BJ (cell line): ENCODE measurements at regions of chr11 and their contacts with region 1.

Region 1: DNA sequence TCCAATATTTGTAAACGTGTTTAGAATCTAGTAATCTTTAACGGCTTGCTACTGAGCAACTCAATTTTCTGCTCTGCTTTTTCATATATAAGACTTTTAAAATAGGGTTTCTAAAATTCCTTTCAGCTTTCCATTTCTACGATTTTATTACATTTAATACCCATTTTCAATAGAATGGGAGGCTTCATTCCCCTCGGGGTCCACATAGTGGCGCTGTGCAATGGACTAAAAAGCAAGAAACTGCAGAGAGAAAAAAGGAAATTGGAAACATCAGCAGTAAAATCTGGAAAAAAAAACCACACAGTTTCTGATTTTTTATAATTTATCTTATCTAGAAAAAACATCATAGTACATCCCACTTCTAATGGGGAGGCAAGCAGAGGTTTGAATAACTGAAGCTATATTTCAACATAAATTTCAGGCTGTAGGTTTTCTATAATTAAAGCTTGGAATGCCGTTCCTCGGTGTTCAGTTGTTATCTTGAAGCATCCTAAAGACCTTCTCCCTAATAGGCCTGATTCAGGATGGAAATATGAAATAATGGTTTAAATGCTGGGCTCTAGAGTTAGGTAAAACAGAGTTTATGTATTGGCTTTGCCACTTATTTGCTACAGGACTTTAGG is 18.7 kb upstream of the JHY start:
- DNase-seq: no peak
- H3K4me3 ChIP-seq: no peak overlapping the region
- H3K27me3 ChIP-seq: peaks cover 4% of the 10 kb centered on the region
- CTCF ChIP-seq: peak; percentile 91

Region 2: DNA sequence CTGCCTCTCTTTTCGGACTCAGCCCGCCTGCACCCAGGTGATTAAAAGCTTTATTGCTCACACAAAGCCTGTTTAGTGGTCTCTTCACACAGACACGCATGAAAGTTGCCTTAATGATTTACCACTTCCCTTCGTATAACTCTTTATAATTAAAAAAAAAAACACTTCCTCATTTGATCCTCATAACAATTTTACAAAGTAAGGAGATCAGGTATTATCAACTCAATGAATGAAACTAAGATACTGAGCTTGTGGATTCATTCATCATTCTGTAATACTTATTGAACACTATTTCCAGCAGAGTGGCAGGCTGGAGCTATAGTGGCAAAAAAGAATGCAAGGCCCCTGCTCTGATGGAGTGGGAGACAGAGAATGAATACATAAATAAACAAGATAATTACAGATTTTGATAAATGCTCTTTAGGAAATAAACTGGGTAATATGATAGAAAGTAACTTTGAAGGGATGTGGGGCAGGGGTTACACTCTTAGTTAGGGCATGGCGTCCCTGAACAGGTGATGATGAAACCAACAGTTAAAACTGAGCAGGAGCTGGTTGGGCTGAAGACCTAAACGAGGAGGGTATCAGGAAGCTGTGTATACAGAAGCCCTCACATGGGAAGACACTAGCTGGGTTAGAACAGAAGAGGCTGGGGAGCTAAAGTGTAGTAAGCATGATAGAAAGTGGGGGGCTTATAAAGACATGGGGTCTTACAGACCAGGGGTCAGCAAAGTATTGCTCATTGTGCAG is 30.9 kb before region 1 on chr11:
- CTCF ChIA-PET with region 1: no interaction called
- POLR2A ChIA-PET with region 1: no interaction called
- DNase-seq: no peak
- H3K4me3 ChIP-seq: no peak overlapping the region
- H3K27me3 ChIP-seq: no peaks in the 10 kb centered on the region
- CTCF ChIP-seq: no peak

Region 3: GRCh38 chr11:122882857-122883645 is 19.2 kb after region 1 on chr11:
- CTCF ChIA-PET with region 1: interaction called, 13 read pairs
- POLR2A ChIA-PET with region 1: no interaction called
- DNase-seq: no peak
- H3K4me3 ChIP-seq: peak overlapping the region; percentile 67
- H3K27me3 ChIP-seq: peaks cover 2% of the 10 kb centered on the region; the same call in 1 of the 2 replicates
- CTCF ChIP-seq: no peak

Region 4: DNA sequence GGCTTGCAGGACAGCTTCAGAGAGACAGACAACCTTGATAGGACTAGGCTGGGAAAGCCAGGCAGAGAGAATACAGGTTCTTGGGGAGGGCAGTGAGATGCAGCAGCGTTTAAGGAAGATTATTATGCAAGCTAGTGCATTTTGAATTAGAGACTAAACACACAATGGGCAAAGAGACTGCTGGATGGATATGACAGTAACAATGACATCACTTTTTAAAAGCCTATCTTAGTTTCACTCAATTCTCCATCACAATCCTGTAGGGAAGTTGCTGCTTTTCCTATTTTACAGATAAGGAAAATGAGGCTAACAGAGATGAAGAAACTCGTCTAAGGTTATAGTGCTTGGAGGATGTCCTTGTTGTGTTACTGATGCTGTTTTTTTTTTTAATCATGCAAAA is 24.3 kb after region 1 on chr11:
- CTCF ChIA-PET with region 1: interaction called, 11 read pairs
- POLR2A ChIA-PET with region 1: no interaction called
- DNase-seq: no peak
- H3K4me3 ChIP-seq: no peak overlapping the region
- H3K27me3 ChIP-seq: no peaks in the 10 kb centered on the region
- CTCF ChIP-seq: no peak

Region 5: DNA sequence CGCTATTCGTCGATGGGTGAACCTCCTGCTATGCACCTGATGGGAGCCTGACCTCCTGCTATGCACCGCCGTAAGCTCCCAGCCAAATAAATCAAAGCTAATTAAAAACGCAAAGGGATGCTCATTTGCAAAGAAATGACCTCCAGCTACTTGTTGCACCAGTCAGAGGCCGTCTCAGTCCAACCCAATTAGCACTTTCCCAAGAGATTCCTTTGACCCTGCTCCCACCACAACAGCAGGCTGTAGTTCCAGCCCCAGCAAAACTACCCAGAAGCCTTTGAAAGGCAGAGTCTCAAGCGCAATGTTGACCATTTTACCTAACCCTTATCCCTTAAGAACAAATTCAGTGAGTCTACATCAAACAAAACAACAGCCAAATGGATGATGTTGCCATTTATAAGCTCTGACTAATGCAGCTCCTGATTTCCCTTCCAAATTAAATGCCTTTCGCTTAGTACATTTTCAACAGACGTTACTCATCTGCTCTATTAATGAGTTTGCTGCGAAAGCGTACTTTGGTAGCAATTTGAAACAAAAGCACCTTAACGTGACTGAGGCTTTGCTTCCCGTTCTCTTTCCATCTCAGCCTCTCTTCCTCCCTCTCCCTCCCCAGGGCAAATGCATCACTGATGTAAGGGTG is 135.0 kb after region 1 on chr11:
- CTCF ChIA-PET with region 1: interaction called, 16 read pairs
- POLR2A ChIA-PET with region 1: no interaction called
- DNase-seq: peak; percentile 19
- H3K4me3 ChIP-seq: no peak overlapping the region
- H3K27me3 ChIP-seq: 0 out of 2 replicates have a peak, but pooled peaks cover 2% of the 10 kb centered on the region
- CTCF ChIP-seq: no peak

Region 6: DNA sequence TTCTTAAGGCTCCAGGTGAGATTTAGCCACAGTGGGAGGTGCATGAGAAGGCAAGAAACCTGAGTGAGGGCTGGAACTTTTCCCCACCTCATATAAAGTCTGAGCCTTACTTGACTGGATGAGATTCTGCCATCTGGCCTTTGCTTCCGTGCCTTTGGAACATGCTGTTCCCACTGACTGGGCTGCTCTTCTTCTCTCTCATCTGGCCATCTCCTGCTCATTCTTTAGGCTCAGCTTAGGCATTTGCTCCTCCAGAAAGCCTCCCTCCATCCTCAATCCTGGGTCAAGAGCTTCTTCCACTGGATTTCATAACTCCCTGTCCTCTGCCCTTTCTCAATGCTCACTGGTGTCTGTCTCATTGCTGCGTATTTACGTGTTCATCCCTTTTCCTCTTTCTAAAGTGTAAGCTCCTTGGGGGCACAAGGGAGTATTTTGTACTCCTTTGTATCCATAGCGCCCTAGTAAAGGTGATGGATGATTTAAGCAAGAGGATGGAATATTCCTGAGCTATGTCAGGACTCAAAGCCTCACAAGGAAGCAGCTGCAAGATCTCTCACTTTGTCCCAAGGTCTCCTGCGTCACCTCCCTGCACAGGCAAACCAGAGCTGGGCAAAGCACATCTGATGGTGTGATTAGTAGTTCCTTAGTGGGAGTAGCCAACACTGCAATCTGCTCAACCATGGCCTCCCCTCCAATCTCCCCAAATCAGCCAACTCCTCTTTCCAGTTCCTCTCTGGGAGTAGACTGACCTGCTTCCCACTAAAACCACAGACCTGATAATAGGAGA is 182.9 kb after region 1 on chr11:
- CTCF ChIA-PET with region 1: interaction called, 21 read pairs
- POLR2A ChIA-PET with region 1: no interaction called
- DNase-seq: no peak
- H3K4me3 ChIP-seq: no peak overlapping the region
- H3K27me3 ChIP-seq: no peaks in the 10 kb centered on the region
- CTCF ChIP-seq: no peak

Region 7: GRCh38 chr11:123054301-123055065 is 190.7 kb after region 1 on chr11:
- CTCF ChIA-PET with region 1: interaction called, 40 read pairs
- POLR2A ChIA-PET with region 1: interaction called, 3 read pairs
- DNase-seq: no peak
- H3K4me3 ChIP-seq: no peak overlapping the region
- H3K27me3 ChIP-seq: no peaks in the 10 kb centered on the region
- CTCF ChIP-seq: peak; percentile 63

Region 8: DNA sequence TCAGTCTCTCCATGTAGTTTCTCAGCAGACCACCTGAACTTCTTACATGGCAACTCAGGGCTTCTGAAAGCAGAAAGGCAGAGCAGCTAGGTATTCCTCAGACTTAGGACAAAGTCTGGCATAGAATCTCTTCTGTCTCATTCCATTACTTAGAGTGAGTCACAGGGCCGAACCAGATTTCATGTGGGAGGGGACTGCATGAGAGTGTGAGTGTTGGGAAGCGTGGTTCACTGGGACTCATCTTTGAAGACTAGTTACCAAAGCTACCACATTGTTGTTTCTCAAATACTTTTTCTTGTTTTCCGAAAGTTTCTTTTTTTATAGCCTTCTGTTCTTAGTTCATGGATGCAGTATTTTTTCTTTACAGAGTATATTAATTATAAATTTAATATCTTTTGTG is 826.7 kb after region 1 on chr11:
- CTCF ChIA-PET with region 1: no interaction called
- POLR2A ChIA-PET with region 1: no interaction called
- DNase-seq: no peak
- H3K4me3 ChIP-seq: no peak overlapping the region
- H3K27me3 ChIP-seq: peaks cover 6% of the 10 kb centered on the region; the same call in 1 of the 2 replicates
- CTCF ChIP-seq: no peak